ENCODE measurements at regions of chr12 and their contacts with region 1.

Region 1: GRCh38 chr12:49031553-49032162 is 13.1 kb upstream of the PRKAG1 start:
- DNase-seq: no peak
- ATAC-seq: no peak
- H3K4me3 Mint-ChIP-seq: no peak overlapping the region
- H3K27ac Mint-ChIP-seq: no peak overlapping the region
- H3K4me1 Mint-ChIP-seq: no peaks in the 10 kb centered on the region
- H3K27me3 Mint-ChIP-seq: no peaks in the 10 kb centered on the region

Region 2: GRCh38 chr12:48936379-48936979 is 95.2 kb before region 1 on chr12:
- CTCF ChIA-PET with region 1: no interaction called
- POLR2A ChIA-PET with region 1: no interaction called
- DNase-seq: peak; percentile 88
- ATAC-seq: peak; percentile 60
- H3K4me3 Mint-ChIP-seq: no peak overlapping the region
- H3K27ac Mint-ChIP-seq: no peak overlapping the region
- H3K4me1 Mint-ChIP-seq: peaks cover 26% of the 10 kb centered on the region
- H3K27me3 Mint-ChIP-seq: no peaks in the 10 kb centered on the region

Region 3: GRCh38 chr12:48980389-48980952 is 51.2 kb before region 1 on chr12:
- CTCF ChIA-PET with region 1: no interaction called
- POLR2A ChIA-PET with region 1: no interaction called
- DNase-seq: peak; percentile 50
- ATAC-seq: peak; percentile 18
- H3K4me3 Mint-ChIP-seq: peak overlapping the region; percentile 76
- H3K27ac Mint-ChIP-seq: peak overlapping the region; percentile 82
- H3K4me1 Mint-ChIP-seq: peaks cover 53% of the 10 kb centered on the region
- H3K27me3 Mint-ChIP-seq: peaks cover 75% of the 10 kb centered on the region

Region 4: DNA sequence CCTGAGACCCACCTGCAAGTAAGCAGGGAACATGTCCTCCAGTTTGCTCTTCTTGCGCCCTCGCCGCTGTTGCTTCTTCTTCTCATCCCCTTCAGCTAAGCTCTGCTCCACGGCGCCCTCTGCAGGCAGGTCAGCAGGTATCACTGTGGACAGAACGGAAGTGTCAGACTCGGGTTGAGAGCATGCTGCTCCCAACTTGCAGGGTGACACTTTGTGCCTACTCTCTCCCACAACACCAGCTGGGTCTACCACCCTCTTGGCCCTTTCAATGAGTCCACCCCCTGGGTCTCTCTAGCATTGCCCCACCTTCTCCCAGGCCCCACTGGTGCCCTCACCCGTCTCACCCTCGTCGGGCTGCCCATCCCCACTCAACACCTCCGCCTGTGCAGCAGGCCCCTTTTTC is 12.2 kb after region 1 on chr12:
- CTCF ChIA-PET with region 1: interaction called, 12 read pairs
- POLR2A ChIA-PET with region 1: interaction called, 3 read pairs
- DNase-seq: peak; percentile 85
- ATAC-seq: peak; percentile 84
- H3K4me3 Mint-ChIP-seq: no peak overlapping the region
- H3K27ac Mint-ChIP-seq: peak overlapping the region; percentile 27
- H3K4me1 Mint-ChIP-seq: peaks cover 4% of the 10 kb centered on the region
- H3K27me3 Mint-ChIP-seq: no peaks in the 10 kb centered on the region

Measured in activated CD8-positive, alpha-beta T cell treated with anti-CD3 and anti-CD28 coated beads, Interleukin-2, amount 10 ng/mL, durations not matched to agents 7 days and 5 days (primary cell).